ENCODE measurements at regions of chr16 and their contacts with region 1.

Region 1: DNA sequence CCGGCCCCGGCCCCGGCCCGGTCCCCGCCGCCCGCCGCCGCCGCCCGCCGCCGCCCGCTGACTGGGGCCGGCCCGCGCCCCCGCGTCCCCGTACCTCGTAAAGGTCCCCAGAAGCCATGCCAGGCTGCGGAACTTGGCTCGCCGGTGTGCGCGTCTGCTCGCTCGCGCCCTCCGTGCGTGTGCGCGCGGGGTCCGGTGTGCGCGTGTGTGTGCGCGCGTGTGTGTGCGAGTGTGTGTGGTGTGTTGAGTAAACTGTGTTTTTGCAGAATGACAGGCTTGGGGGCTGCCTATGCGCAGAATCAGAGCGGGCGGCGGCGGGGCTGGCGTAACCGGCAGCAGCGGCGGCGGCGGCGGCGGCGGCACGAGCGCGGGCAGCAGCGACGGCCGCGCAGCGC is 345 bp downstream of the CDYL2 start:
- DNase-seq: peak; percentile 53
- H3K4me3 Mint-ChIP-seq: peak overlapping the region; percentile 94
- H3K27ac Mint-ChIP-seq: peak overlapping the region; percentile 90
- H3K4me1 Mint-ChIP-seq: peaks cover 49% of the 10 kb centered on the region
- H3K27me3 Mint-ChIP-seq: no peaks in the 10 kb centered on the region

Region 2: GRCh38 chr16:80759419-80760162 is 44.5 kb before region 1 on chr16:
- intact Hi-C with region 1: loop called (anchors 1 kb)
- DNase-seq: no peak
- H3K4me3 Mint-ChIP-seq: no peak overlapping the region
- H3K27ac Mint-ChIP-seq: peak overlapping the region; percentile 80
- H3K4me1 Mint-ChIP-seq: peaks cover 22% of the 10 kb centered on the region
- H3K27me3 Mint-ChIP-seq: no peaks in the 10 kb centered on the region

Measured in activated T-helper 2 cell treated with anti-CD3 and anti-CD28 coated beads, Interferon-gamma antibody, Interleukin-2, Interleukin-4, amounts not matched to agents 10 μg/mL and 5 μg/mL and 100 μg/mL, durations not matched to agents 14 hours and 24 hours and 36 hours (primary cell).